GM10248 (cell line): ENCODE measurements at regions of chr6 and their contacts with region 1.

Region 1: GRCh38 chr6:38248500-38249234 is 391.1 kb downstream of the BTBD9 start:
- DNase-seq: no peak
- CTCF ChIP-seq: no peak

Region 2: GRCh38 chr6:38259736-38260135 is 11.1 kb after region 1 on chr6:
- CTCF ChIA-PET with region 1: interaction called, 11 read pairs
- POLR2A ChIA-PET with region 1: no interaction called
- DNase-seq: no peak
- CTCF ChIP-seq: no peak

Region 3: GRCh38 chr6:38273325-38273724 is 24.7 kb after region 1 on chr6:
- CTCF ChIA-PET with region 1: no interaction called
- POLR2A ChIA-PET with region 1: no interaction called
- DNase-seq: no peak
- CTCF ChIP-seq: no peak